OCI-LY7 (cell line): ENCODE measurements at regions of chr10 and their contacts with region 1.

Region 1: DNA sequence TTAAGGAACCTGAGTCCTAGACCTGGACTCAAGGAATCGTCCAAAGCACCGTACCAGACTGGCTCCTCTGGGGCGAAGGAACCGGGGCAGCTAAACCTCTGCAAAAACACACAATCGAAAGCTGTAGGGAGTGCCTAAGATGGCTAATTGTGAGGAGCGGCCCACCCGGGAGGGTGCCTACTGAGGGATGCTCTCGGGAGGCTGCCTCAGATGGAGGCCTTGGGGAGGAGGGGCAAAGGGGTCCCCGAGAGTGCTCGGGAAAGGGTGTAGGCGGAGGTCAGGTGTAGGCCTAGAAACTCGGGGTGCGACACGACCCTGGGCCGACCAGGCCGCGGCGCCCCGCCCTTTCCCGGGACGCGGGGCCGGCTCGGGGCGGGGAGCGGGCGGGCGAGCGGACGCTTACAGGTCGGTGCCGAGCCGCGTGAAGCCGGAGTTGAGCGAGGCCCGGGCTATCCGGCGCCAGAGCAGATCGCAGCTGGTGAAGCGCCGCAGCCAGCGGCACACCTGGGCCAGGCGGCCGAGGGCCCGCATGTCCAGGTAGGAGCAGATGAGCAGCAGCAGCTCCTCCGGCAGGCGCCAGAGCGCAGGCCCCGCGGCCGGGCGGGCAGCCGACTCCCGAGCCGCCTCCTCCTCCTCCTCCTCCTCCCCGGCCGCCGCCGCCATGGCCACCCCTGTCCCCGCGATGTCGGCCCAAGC is 844 bp downstream of the FBXW4 start:
- DNase-seq: peak; percentile 78
- H3K4me3 ChIP-seq: peak overlapping the region; percentile 81
- H3K27ac ChIP-seq: peak overlapping the region; percentile 75
- H3K4me1 ChIP-seq: peaks cover 28% of the 10 kb centered on the region
- CTCF ChIP-seq: no peak

Region 2: GRCh38 chr10:101602761-101603398 is 91.2 kb before region 1 on chr10:
- CTCF ChIA-PET with region 1: no interaction called
- POLR2A ChIA-PET with region 1: interaction called, 3 read pairs
- intact Hi-C with region 1: loop called (anchors 1 kb)
- DNase-seq: peak; percentile 90
- H3K4me3 ChIP-seq: no peak overlapping the region
- H3K27ac ChIP-seq: no peak overlapping the region
- H3K4me1 ChIP-seq: no peaks in the 10 kb centered on the region
- CTCF ChIP-seq: peak; percentile 99

Region 3: GRCh38 chr10:101617102-101617823 is 76.9 kb before region 1 on chr10:
- CTCF ChIA-PET with region 1: no interaction called
- POLR2A ChIA-PET with region 1: interaction called, 4 read pairs
- intact Hi-C with region 1: loop called (anchors 1 kb)
- DNase-seq: peak; percentile 95
- H3K4me3 ChIP-seq: peak overlapping the region; percentile 47
- H3K27ac ChIP-seq: peak overlapping the region; percentile 96
- H3K4me1 ChIP-seq: peaks cover 52% of the 10 kb centered on the region
- CTCF ChIP-seq: peak; percentile 71